ENCODE measurements at regions of chr2 and their contacts with region 1.

Region 1: DNA sequence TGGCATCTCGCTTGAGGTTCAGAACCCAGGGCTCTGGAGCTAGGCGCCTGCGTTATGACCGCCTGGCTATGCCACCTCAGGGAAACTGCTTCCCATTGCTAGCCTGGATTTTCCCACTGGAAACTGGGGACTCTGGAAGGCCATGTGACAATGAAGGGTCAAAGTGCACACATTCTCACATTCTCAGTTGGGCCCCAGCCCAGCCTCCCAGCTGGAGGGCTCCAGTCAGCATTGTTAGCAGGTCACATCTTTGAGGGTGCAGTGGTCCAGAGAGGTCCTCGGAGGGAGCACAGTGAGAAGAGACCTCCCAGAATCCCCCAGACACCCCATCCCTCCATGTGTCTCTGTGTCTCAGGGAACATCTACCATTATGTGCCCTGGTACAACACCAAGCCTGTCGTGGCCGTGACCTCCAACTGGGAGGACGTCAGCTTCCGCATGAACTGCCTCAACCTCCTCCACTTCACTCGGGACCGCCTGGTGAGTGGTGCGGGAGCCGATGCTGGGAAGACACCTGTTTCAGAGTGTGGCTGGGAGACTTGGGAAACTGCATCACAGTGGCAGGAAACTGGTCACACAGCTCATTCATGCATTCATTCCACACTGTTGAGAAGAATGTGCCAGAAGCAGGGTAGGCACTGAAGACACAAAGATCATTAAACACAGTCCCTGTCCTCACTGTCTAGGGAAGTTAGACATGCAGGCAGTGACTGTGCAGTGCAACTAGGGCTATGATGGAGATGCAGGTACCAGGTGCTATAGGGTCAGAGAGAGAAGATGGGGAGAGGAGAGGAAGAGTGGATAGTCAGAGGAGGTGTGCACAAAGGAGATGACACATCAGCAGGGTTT is 41.6 kb downstream of the FER1L5 start:
- DNase-seq: no peak
- H3K4me3 ChIP-seq: no peak overlapping the region
- H3K27ac ChIP-seq: no peak overlapping the region
- H3K4me1 ChIP-seq: no peaks in the 10 kb centered on the region
- H3K27me3 ChIP-seq: no peaks in the 10 kb centered on the region
- CTCF ChIP-seq: no peak
- POLR2A ChIP-seq: no peak

Region 2: GRCh38 chr2:96710985-96711384 is 26.8 kb after region 1 on chr2:
- intact Hi-C with region 1: loop called (anchors 2 kb)
- DNase-seq: no peak
- H3K4me3 ChIP-seq: no peak overlapping the region
- H3K27ac ChIP-seq: no peak overlapping the region
- H3K4me1 ChIP-seq: no peaks in the 10 kb centered on the region
- H3K27me3 ChIP-seq: no peaks in the 10 kb centered on the region
- CTCF ChIP-seq: no peak
- POLR2A ChIP-seq: no peak

Measured in breast epithelium (tissue), 4 donors.